ENCODE measurements at regions of chr3 and their contacts with region 1.

Region 1: DNA sequence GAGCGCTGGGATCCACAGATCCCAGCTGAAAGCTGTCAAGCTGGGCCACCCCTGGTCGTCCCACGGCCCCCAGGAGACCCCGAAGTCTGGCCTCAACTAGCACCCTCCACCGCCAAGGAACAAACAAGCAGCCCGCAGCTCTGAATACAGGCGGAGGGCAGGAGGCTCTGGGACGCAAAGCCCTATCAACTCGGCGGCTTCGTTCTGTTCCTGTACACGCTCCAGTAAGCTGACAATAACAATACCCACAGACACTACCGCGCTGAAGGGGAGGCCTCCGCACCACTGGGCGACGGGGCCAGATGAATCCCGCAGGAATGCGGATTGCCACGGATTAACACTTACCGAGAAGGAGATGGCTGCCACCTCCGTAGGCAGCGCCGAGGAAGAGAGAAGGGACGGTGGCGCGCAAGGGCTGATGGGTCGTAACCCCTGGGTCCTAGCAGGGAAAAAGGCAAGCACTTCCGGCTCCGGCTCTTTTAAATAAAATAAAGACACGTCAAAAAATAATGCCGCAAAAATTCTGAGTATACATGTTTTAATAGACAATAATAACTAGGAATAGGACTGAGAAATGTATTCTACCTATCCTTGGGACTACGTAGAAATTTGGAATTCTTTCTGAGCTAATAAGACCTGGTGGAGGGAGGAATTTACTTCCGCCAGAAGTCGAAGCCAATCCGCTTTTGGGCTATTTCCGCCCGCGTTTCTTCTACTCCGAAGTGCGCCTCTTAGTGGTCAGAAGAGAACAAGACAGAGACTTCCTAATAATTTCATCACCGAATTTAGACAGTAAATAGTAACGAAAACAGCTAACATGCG is at the start of gene RPL32:
- DNase-seq: peak; percentile 72 to 97 (median 84)
- ATAC-seq: peak; percentile 91
- H3K4me3 ChIP-seq: peak within 1 kb of the TSS; percentile 86 to 98
- H3K4me3 Mint-ChIP-seq: peak within 1 kb of the TSS; percentile 98
- H3K27ac ChIP-seq: peak within 1 kb of the TSS; percentile 93 to 95
- H3K27ac Mint-ChIP-seq: peak within 1 kb of the TSS; percentile 99
- H3K4me1 ChIP-seq: peaks cover 29% of the 10 kb centered on the region
- H3K4me1 Mint-ChIP-seq: peaks cover 48% of the 10 kb centered on the region
- H3K27me3 ChIP-seq: no peaks in the 10 kb centered on the region
- H3K27me3 Mint-ChIP-seq: no peaks in the 10 kb centered on the region
- CTCF ChIP-seq: peak; percentile 68
- total RNA-seq, gene RPL32: 4,188 to 4,224 TPM

Region 2: DNA sequence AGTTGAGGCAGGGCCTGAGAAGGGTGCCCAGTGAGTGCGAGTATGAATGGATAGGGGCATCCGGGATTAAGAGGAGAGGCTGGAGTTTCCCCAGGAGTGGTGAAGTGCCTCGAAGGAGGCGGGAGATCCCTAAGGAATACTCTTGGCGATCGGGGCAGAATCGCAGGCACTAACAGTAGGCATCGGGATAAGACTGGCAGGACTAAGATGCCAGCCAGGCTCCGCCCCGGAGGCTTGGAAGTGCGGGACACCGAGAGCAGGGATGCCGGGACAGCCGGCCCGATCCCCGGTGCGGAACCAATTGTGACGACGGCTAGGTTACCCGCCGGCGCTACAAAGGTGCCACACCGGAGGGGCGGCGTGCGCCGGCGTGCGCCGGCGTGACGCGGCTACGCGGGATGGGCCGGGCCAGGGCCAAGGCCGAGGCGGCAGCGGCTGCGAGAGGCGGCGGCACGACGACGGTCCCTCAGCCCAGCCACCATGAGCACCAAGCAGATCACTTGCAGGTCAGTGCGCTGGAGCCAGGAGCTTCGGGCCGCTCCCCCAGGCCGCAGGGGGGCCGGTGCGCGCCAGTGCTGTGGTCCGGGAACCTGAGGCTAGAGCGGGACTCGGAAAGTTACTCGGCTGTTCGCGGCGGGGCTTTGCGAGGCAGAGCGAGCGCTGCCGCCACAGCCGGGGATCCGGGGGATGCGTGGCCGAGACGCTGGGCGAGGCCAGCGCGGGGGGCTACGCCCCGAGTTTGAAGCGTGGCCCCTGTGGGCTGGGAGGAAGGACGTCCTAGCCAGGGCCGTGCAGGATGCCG is 284.5 kb before region 1 on chr3 and contains the start of gene MKRN2:
- CTCF ChIA-PET with region 1: no interaction called
- POLR2A ChIA-PET with region 1: no interaction called
- intact Hi-C with region 1: loop called in 1 of 2 experiments (anchors 1 kb)
- DNase-seq: peak; percentile 67 to 94 (median 83)
- ATAC-seq: peak; percentile 93
- H3K4me3 ChIP-seq: peak within 1 kb of the TSS; percentile 73 to 86
- H3K4me3 Mint-ChIP-seq: peak within 1 kb of the TSS; percentile 89
- H3K27ac ChIP-seq: peak within 1 kb of the TSS; percentile 86 to 92
- H3K27ac Mint-ChIP-seq: peak within 1 kb of the TSS; percentile 90
- H3K4me1 ChIP-seq: peaks cover 49% of the 10 kb centered on the region
- H3K4me1 Mint-ChIP-seq: peaks cover 60% of the 10 kb centered on the region
- H3K27me3 ChIP-seq: peaks cover 6 to 16% of the 10 kb centered on the region in 2 experiments
- H3K27me3 Mint-ChIP-seq: peaks cover 24% of the 10 kb centered on the region
- CTCF ChIP-seq: no peak
- total RNA-seq, gene MKRN2: 24.8 to 25.5 TPM

Region 3: DNA sequence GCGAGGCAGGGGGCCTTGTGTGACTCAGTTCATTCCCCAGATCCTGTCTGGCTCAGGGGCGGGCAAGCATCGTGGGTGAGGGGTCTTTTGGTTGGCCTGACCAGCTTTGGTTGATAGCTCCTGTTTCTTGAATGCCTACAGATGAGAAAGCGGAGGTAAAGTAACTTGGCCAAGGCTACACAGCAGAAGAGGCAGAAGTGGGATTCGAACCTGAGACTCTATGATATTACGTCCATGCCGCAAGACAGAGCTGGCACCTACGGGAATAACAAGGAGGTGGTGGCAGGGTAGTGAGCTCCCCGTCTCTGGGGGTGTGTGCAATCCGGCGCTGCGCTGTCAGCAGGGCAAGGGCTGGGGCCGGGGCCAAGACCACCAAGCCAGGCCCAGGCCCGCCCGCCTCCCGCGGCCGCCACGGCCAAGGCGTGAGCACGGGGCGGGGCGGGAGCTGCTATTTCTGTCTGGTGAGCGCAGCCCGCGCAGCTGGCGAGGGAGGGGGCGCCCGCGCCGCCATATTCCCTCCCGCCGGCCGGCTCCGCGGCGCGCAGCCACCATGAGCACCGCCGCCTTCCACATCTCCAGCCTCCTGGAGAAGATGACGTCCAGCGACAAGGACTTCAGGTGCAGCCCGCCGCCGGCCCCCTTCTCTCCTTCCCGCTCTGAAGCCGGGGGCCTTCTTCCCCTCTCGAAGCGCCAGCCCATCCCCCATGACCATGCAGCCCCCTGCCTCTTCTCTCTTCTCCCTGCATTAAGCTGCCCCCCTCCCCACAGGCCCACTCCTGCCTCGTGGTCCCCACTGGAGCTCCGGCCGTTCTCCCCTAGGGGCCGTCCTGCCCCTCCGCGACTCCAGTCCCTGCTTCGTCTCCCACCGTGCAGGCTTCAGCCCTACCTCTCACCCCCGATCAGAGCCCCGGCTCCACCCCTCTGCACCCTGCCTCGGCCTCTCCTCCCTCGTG is 44.9 kb before region 1 on chr3 and contains the start of gene CAND2:
- CTCF ChIA-PET with region 1: interaction called, 4 read pairs
- POLR2A ChIA-PET with region 1: interaction called, 4 read pairs
- intact Hi-C with region 1: loop called in 1 of 2 experiments (anchors 1 kb)
- DNase-seq: peak in 7 of 9 experiments; percentile 15 to 66 (median 43)
- ATAC-seq: peak; percentile 86
- H3K4me3 ChIP-seq: peak within 1 kb of the TSS; percentile 65 to 67
- H3K4me3 Mint-ChIP-seq: peak within 1 kb of the TSS; percentile 87
- H3K27ac ChIP-seq: no peak within 1 kb of the TSS
- H3K27ac Mint-ChIP-seq: peak within 1 kb of the TSS; percentile 32
- H3K4me1 ChIP-seq: peaks cover 6% of the 10 kb centered on the region
- H3K4me1 Mint-ChIP-seq: peaks cover 16% of the 10 kb centered on the region
- H3K27me3 ChIP-seq: no peaks in the 10 kb centered on the region
- H3K27me3 Mint-ChIP-seq: peaks cover 3% of the 10 kb centered on the region
- CTCF ChIP-seq: no peak
- total RNA-seq, gene CAND2: 0.92 to 1.1 TPM

Region 4: GRCh38 chr3:12830785-12831156 is 10.6 kb before region 1 on chr3:
- CTCF ChIA-PET with region 1: interaction called, 23 read pairs
- POLR2A ChIA-PET with region 1: interaction called, 13 read pairs
- intact Hi-C with region 1: no loop called
- DNase-seq: no peak
- ATAC-seq: no peak
- H3K4me3 ChIP-seq: no peak overlapping the region
- H3K4me3 Mint-ChIP-seq: no peak overlapping the region
- H3K27ac ChIP-seq: no peak overlapping the region
- H3K27ac Mint-ChIP-seq: peak overlapping the region; percentile 72
- H3K4me1 ChIP-seq: no peaks in the 10 kb centered on the region
- H3K4me1 Mint-ChIP-seq: no peaks in the 10 kb centered on the region
- H3K27me3 ChIP-seq: no peaks in the 10 kb centered on the region
- H3K27me3 Mint-ChIP-seq: no peaks in the 10 kb centered on the region
- CTCF ChIP-seq: no peak

Region 5: DNA sequence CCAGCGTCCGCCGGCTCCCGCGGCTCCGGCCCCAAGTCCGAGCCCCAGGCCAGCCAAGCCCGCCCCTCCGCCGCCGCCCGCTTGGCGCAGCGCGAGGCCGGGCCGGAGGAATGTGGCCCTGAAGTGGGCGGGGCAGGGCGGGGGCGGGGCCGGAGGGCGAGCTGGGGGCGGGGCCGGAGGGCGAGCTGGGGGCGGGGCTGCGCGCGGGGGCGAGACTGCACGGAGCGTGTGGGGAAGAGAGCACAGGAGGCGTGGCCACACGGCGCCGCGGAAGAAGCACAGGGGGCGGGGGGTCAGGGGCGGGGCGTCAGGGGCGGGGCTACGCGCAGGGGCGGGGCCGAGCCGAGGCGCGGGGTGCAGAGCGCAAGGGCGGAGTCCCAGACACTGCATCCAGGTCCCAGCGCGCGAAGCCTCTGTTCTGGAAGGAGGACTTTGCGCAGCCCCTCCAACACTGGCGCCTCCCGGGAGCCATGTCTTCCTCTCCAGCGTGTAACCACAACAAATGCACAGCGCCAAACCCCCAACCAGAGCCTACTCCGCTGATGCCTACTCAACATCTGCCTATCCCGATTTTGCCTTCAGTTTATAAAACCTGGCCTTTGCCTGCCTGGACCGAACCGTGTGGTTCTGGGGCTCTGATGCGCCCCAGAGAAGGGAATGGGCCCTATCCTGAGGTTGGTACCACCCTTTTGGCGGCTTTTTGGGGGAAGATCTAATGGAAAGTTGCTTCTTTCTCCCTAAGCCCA is 126.4 kb after region 1 on chr3:
- CTCF ChIA-PET with region 1: interaction called, 6 read pairs
- POLR2A ChIA-PET with region 1: no interaction called
- intact Hi-C with region 1: loop called in 1 of 2 experiments (anchors 10 kb)
- DNase-seq: peak; percentile 82 to 95 (median 89)
- ATAC-seq: peak; percentile 97
- H3K4me3 ChIP-seq: peak overlapping the region; percentile 42 to 63
- H3K4me3 Mint-ChIP-seq: peak overlapping the region; percentile 82
- H3K27ac ChIP-seq: no peak overlapping the region
- H3K27ac Mint-ChIP-seq: peak overlapping the region; percentile 69
- H3K4me1 ChIP-seq: peaks cover 59% of the 10 kb centered on the region
- H3K4me1 Mint-ChIP-seq: peaks cover 74% of the 10 kb centered on the region
- H3K27me3 ChIP-seq: no peaks in the 10 kb centered on the region
- H3K27me3 Mint-ChIP-seq: no peaks in the 10 kb centered on the region
- CTCF ChIP-seq: no peak